Dorsolateral prefrontal cortex (tissue), 120 donors: ENCODE measurements at regions of chr4 and their contacts with region 1.

Region 1: DNA sequence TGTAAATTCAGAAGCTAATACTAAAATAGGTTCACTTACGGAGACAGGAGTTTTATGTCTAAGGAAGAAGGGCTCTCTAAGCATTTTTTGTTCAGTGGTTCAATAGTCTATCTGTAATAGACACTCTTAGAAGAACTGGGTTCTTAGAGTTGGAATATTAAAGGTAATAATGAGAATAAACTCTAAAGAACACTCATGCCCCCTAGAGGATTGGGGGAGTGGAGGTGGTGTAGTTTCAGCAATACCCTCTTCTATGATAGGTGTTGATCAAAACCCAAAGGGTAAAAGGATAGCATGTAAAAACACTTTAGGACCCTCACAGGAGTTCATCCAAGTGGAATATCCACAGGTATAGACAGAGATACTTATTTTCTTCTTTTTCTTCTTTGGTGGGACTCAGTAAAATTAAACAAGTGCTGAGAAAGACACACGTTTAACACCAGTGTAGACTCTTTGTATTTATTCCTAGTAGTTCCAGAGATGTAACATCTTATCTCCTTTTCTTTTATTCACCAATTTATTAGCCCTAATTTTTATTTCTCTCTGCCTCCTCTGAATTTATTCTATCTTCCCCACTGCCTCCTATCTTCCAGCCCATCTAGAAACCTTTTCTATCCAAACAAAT is 25.7 kb upstream of the MND1 start:
- DNase-seq: peak in 1 of 10 donors; percentile 22
- H3K4me3 ChIP-seq: no peak overlapping the region
- H3K27ac ChIP-seq: peak overlapping the region in 22 of 59 donors; percentile 3 to 73 (median 42)
- H3K27me3 ChIP-seq: no peaks in the 10 kb centered on the region
- CTCF ChIP-seq: peak; percentile 20 to 79 (median 61)

Region 2: DNA sequence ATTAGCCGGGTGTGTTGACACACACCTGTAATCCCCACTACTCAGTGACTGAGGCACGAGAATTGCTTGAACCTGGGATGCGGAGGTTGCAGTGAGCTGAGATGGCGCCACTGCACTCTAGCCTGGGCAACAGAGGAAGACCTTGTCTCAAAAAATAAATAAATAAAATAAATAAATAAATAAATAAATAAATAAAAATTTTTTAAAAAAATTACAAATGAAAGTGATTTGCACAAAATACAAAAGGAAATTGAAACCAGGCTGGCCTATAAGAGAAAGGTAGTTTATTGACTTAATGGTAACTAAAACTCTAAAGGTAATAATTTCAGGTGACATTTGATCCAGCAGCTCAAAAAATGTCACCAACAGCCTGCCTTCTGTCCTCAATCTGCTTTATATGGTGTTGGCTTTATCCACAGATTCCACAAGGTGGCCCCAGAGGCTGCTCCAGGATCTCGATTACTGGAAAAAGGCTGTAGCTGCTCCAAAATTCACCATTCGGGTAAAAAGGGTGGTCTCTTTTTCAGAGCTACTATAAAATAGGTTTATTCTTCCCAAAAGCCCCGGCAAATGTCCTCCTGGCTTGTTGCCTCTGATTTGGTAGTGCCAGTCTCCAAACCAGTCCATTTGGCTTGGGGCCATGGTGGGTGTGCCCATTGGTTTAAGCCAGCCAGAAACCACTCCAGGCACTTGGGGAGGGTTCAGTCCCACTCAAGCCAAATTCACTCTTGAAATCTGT is 175.9 kb before region 1 on chr4:
- intact Hi-C with region 1: loop called (anchors 2 to 5 kb)
- DNase-seq: peak; percentile 52 to 87 (median 72)
- H3K4me3 ChIP-seq: peak overlapping the region in 17 of 59 donors; percentile 1 to 32 (median 11)
- H3K27ac ChIP-seq: peak overlapping the region in 55 of 59 donors; percentile 2 to 100 (median 74)
- H3K27me3 ChIP-seq: no peaks in the 10 kb centered on the region
- CTCF ChIP-seq: peak; percentile 65 to 96 (median 89)

Region 3: DNA sequence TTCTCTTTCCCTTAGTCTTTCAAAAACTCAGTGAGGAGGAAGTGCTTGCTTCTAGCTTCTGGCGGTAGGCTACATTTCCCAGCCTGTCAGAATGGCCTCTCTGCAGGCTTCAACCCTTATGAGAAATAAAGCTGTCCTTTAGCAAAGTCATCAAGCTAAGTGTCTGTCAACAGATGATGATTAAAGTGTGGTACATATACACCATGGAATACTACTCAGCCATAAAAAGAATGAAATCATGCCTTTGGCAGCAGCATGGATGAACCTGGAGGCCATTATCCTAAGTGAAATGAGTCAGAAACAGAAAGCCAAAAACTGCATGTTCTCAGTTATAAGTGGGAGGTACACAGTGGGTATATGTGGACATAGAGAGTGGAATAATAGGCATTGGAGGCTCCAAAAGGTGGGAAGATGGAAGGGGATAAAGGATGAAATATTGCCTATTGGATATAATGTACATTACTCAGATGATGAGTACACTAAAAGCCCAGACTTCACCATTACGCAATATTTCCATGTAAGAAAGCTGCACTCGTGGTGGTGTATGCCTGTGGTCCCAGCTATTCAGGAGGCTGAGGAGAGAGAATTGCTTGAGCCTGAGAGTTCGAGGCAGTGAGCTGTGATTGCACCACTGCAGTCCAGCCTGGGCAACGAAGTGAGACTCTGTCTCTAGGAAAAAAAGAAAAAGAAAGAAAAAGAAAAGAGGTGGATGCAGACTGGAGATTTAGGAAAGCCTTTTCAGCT is 106.7 kb before region 1 on chr4:
- intact Hi-C with region 1: loop called in 1 of 2 experiments (anchors 5 kb)
- DNase-seq: no peak
- H3K4me3 ChIP-seq: peak overlapping the region in 19 of 59 donors; percentile 1 to 80 (median 7)
- H3K27ac ChIP-seq: peak overlapping the region in 50 of 59 donors; percentile 4 to 76 (median 56)
- H3K27me3 ChIP-seq: no peaks in the 10 kb centered on the region
- CTCF ChIP-seq: no peak

Region 4: DNA sequence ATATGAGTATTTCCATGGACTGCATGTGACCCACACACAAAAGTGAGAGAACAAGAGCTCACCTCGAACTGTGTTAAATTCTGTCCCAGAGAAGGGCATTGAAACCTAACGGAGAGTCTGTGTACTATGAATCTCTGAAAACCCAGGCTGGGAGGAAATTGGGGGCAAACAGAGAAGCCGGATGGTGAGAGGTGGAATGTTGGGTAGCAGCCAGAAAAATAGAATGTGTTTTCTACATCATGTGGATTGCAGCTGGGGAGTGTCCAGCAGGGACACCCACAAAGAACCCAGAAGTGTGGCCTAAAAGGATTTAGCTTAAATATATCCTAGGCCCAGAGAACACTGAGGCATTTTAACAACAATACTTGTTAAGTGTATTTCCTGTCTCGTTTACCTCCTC is 64.3 kb after region 1 on chr4:
- intact Hi-C with region 1: no loop called
- DNase-seq: peak in 1 of 10 donors; percentile 11
- H3K4me3 ChIP-seq: no peak overlapping the region
- H3K27ac ChIP-seq: no peak overlapping the region
- H3K27me3 ChIP-seq: no peaks in the 10 kb centered on the region
- CTCF ChIP-seq: no peak